Panc1 (cell line): ENCODE measurements at regions of chr10 and their contacts with region 1.

Region 1: DNA sequence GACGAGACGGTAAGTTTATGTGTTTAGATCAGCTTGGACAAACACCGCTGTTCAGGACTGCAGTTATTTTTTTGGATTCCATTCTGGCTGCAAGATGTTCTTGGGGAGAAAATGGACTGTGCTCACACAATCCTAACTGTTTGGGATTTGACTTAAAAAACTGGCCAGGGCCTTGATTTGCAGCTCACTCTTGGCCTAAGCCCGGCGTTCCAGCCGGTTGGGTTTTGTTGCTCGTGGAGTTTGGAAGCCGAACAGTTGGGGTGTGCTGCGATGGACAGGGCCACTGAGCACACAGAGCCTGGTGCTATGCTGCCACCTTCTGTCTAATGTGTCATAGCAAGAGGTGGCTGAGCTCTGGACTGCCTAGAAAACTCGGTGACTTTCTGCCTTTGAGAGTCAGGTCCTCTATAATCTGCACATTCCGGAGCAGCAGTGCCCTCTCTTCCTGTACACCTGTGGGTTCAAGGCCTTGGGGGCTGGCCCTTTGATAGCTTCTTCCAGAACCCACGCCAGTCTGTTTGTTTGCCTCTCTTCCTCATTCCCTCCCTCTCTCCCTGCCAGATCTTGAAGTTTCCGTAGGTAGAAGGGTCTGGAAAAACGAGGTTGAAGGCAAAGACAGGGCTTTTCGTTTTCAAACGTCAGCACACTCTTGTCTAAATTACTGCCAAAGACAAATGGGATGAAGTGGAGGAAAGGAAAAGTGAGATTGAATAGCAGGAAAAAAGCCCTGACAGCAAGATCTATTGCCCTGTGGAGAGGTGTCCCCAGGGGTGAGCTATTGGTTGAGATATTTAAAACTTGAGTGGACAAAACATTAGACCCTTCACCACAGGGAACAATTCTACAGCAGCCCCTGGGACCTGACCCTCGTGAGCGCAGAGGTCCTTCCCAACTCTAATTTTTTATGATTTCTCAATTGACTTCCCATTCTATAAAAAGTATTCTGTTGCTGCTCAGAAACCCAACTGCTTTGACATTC is 167.5 kb upstream of the HABP2 start:
- DNase-seq: peak; percentile 51
- ATAC-seq: peak; percentile 100
- H3K4me3 ChIP-seq: no peak overlapping the region
- H3K27ac ChIP-seq: no peak overlapping the region
- H3K4me1 ChIP-seq: peaks cover 11% of the 10 kb centered on the region
- H3K27me3 ChIP-seq: peaks cover 26% of the 10 kb centered on the region
- CTCF ChIP-seq: peak; percentile 91

Region 2: DNA sequence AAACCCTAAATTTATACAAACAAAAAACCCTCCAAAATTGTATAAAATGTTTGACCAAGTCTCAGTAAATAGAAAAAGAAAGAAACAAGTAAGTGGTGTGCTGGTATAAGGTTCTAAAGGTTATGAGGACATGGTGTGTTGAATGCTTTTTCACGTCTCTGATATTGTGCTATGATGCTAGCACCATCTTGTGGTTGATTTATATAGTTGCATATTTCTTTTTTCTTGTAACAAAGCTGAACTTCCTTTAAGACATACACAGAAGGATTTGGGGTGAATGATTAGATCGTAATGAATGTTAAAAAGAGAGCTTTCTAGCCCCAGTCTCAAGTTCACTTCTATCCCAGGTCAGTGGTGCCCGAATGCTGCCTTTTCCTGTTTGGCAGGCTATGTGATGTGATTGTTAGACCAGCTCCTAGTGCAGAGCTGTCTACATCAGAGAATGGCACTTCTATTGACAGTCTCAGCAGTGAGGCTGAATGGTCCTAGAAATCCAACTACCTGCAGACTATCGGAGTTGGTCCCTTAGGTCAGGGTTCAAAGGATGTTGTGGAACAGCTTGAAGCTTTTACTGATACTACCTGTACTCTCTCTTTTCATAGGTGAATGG is 913.3 kb before region 1 on chr10:
- CTCF ChIA-PET with region 1: interaction called, 6 read pairs
- POLR2A ChIA-PET with region 1: no interaction called
- in situ Hi-C with region 1: no loop called
- intact Hi-C with region 1: loop called (anchors 5 kb)
- DNase-seq: peak; percentile 50
- ATAC-seq: peak; percentile 87
- H3K4me3 ChIP-seq: no peak overlapping the region
- H3K27ac ChIP-seq: no peak overlapping the region
- H3K4me1 ChIP-seq: 0 out of 2 replicates have a peak, but pooled peaks cover 5% of the 10 kb centered on the region
- H3K27me3 ChIP-seq: no peaks in the 10 kb centered on the region
- CTCF ChIP-seq: peak; percentile 85

Region 3: DNA sequence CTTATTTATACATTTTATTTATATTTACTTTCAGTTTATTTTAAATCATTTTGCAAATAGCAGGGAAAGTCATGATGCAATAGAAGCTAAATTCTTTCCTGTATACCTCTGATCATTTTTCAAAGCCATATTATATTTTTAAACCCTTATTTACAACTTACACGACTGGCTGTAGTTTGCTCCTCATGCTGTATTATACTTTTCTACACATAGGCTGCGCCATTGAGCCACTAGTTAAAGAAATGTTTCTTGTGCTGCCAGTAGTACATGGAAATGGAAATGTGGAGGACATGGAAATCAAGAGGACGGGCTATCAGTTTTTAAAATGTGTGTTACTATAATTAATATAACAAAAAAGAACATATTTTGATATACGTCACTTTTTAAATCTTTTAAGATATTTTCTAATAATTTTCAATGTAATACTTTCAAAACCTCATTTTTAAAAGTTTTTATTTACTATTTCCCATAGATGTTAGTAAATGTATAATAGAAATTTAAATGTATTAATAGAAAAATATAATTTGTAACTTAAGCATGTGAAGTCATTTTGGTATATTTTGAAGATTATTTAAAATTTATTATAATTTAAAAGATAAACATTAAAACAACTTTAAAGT is 819.8 kb before region 1 on chr10:
- CTCF ChIA-PET with region 1: no interaction called
- POLR2A ChIA-PET with region 1: no interaction called
- in situ Hi-C with region 1: no loop called
- intact Hi-C with region 1: loop called (anchors 2 kb)
- DNase-seq: peak; percentile 69
- ATAC-seq: peak; percentile 89
- H3K4me3 ChIP-seq: no peak overlapping the region
- H3K27ac ChIP-seq: no peak overlapping the region
- H3K4me1 ChIP-seq: peaks cover 14% of the 10 kb centered on the region; the same call in 1 of the 2 replicates
- H3K27me3 ChIP-seq: no peaks in the 10 kb centered on the region
- CTCF ChIP-seq: peak; percentile 85; the same call in 1 of the 2 replicates

Region 4: GRCh38 chr10:112775381-112775780 is 609.9 kb before region 1 on chr10:
- CTCF ChIA-PET with region 1: interaction called, 11 read pairs
- POLR2A ChIA-PET with region 1: no interaction called
- in situ Hi-C with region 1: no loop called
- intact Hi-C with region 1: no loop called
- DNase-seq: no peak
- ATAC-seq: no peak
- H3K4me3 ChIP-seq: no peak overlapping the region
- H3K27ac ChIP-seq: peak overlapping the region; percentile 62
- H3K4me1 ChIP-seq: peaks cover 41% of the 10 kb centered on the region
- H3K27me3 ChIP-seq: no peaks in the 10 kb centered on the region
- CTCF ChIP-seq: peak; percentile 36; the same call in 1 of the 2 replicates

Region 5: GRCh38 chr10:112904000-112904399 is 481.3 kb before region 1 on chr10:
- CTCF ChIA-PET with region 1: no interaction called
- POLR2A ChIA-PET with region 1: interaction called, 18 read pairs
- in situ Hi-C with region 1: no loop called
- intact Hi-C with region 1: no loop called
- DNase-seq: no peak
- ATAC-seq: no peak
- H3K4me3 ChIP-seq: no peak overlapping the region
- H3K27ac ChIP-seq: no peak overlapping the region
- H3K4me1 ChIP-seq: no peaks in the 10 kb centered on the region
- H3K27me3 ChIP-seq: no peaks in the 10 kb centered on the region
- CTCF ChIP-seq: no peak

Region 6: GRCh38 chr10:113139699-113140098 is 245.6 kb before region 1 on chr10:
- CTCF ChIA-PET with region 1: no interaction called
- POLR2A ChIA-PET with region 1: no interaction called
- in situ Hi-C with region 1: no loop called
- intact Hi-C with region 1: loop called (anchors 10 kb)
- DNase-seq: no peak
- ATAC-seq: no peak
- H3K4me3 ChIP-seq: no peak overlapping the region
- H3K27ac ChIP-seq: no peak overlapping the region
- H3K4me1 ChIP-seq: no peaks in the 10 kb centered on the region
- H3K27me3 ChIP-seq: no peaks in the 10 kb centered on the region
- CTCF ChIP-seq: peak; percentile 49; the same call in 1 of the 2 replicates

Region 7: DNA sequence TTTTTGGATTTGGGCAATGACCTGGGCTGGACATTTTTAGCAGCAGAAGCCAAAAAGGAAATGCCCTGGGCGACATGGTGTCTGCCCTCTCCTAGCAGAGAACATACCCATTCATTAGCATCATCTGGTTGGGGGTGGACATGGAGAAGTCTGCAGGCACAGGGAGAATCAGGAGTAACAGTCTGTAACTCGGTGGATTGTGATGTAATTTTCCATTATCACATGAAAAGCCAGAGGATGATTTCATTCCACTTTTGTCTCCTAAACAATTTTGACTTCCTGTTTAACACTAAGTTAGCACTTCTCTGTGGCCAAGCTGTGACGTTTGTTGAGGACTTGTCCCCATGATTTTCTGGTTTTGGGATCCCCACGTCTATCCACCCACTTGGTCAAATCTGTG is 13.8 kb after region 1 on chr10:
- CTCF ChIA-PET with region 1: no interaction called
- POLR2A ChIA-PET with region 1: no interaction called
- in situ Hi-C with region 1: no loop called
- intact Hi-C with region 1: no loop called
- DNase-seq: no peak
- ATAC-seq: no peak
- H3K4me3 ChIP-seq: no peak overlapping the region
- H3K27ac ChIP-seq: no peak overlapping the region
- H3K4me1 ChIP-seq: no peaks in the 10 kb centered on the region
- H3K27me3 ChIP-seq: peaks cover 14% of the 10 kb centered on the region
- CTCF ChIP-seq: no peak

Region 8: GRCh38 chr10:113521123-113521795 is 135.9 kb after region 1 on chr10:
- CTCF ChIA-PET with region 1: interaction called, 3 read pairs
- POLR2A ChIA-PET with region 1: no interaction called
- in situ Hi-C with region 1: no loop called
- intact Hi-C with region 1: loop called (anchors 5 kb)
- DNase-seq: peak; percentile 61
- ATAC-seq: peak; percentile 74
- H3K4me3 ChIP-seq: no peak overlapping the region
- H3K27ac ChIP-seq: no peak overlapping the region
- H3K4me1 ChIP-seq: no peaks in the 10 kb centered on the region
- H3K27me3 ChIP-seq: peaks cover 2% of the 10 kb centered on the region
- CTCF ChIP-seq: peak; percentile 100